ENCODE measurements at regions of chr1 and their contacts with region 1.

Region 1: GRCh38 chr1:24385160-24385940 is 28.2 kb downstream of the STPG1 start:
- DNase-seq: no peak
- ATAC-seq: no peak
- H3K4me3 ChIP-seq: no peak overlapping the region
- H3K27ac ChIP-seq: no peak overlapping the region
- H3K4me1 ChIP-seq: no peaks in the 10 kb centered on the region
- H3K27me3 ChIP-seq: no peaks in the 10 kb centered on the region
- CTCF ChIP-seq: peak in 2 of 4 donors; percentile 11 to 16

Region 2: DNA sequence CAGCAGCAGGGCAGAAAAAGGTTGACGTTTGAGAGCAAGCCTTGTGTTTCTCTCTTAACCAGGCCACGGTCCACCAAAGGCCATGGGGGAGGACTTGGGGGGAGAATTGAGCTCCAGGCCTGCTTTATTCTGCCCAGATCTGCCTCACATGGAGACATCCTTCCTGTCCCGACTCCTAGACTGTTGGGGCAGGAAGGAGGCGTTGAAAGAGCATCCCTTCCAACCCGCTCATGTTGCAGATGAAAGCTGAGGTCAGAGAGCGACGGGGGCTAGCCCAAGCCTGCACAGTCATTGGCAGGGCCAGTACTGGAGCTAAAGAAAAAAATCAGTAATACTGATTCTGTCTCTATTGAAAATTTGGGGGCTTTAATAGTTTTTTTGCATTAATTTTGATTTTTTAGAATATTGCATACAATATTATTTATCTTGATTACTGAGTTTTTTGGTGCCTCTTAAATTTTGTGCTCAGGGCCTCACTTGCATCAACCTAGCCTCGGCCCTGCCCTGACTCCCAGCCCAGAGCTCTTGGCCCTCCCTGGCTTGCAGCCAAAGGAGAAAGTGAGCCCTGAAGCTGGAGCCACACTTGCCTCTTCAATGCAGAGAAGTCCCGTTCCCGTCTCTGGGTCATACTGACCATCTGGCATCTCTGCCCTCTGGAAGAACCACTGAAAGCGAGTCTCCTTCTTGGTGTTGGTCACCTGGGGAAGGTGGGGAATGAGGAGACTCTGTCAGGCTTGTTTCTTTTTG is 319.9 kb before region 1 on chr1:
- intact Hi-C with region 1: loop called in 1 of 3 experiments (anchors 10 kb)
- DNase-seq: no peak
- ATAC-seq: no peak
- H3K4me3 ChIP-seq: no peak overlapping the region
- H3K27ac ChIP-seq: no peak overlapping the region
- H3K4me1 ChIP-seq: no peaks in the 10 kb centered on the region
- H3K27me3 ChIP-seq: no peaks in the 10 kb centered on the region
- CTCF ChIP-seq: no peak

Region 3: GRCh38 chr1:24216276-24217074 is 168.9 kb before region 1 on chr1:
- intact Hi-C with region 1: loop called in 1 of 3 experiments (anchors 10 kb)
- DNase-seq: peak in 4 of 6 donors; percentile 21 to 60 (median 54)
- ATAC-seq: peak; percentile 48 to 82 (median 66)
- H3K4me3 ChIP-seq: no peak overlapping the region
- H3K27ac ChIP-seq: no peak overlapping the region
- H3K4me1 ChIP-seq: no peaks in the 10 kb centered on the region
- H3K27me3 ChIP-seq: no peaks in the 10 kb centered on the region
- CTCF ChIP-seq: no peak

Measured in pancreas (tissue), 10 donors.